ENCODE measurements at regions of chr5 and their contacts with region 1.

Region 1: DNA sequence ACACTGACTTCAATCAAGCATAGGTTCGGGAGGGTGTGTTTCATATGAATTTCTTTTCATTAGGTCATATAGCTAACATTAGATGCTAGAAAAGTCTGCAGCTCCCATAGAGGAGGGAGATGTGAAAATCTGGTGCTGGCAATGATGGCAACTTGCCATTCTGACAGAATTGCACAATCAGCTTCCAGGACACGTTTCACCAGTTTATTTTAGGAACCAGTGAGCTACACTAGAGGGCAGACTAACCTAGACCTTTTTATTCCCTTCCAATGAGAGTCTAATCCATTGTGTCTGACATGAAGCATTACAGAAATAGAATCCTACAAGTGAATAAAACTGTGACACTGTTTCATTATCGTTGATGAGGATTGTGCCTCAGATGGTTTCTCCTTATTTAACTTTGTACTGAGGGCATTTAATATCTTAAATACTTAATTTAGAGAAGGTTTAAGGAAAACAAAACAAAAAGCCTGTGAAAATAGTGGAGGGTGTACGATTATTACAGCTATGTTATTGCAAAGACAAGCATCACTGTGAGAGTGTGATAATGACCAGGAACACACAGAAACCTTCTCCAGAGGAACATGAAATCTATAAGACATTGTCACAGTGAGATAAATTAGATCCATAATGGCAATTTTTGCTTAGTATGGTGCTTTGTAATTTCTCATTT is 363.3 kb upstream of the RPS23 start:
- DNase-seq: peak in 1 of 2 donors; percentile 79
- ATAC-seq: peak; percentile 85 to 98 (median 94)
- H3K4me3 ChIP-seq: no peak overlapping the region
- H3K27ac ChIP-seq: peak overlapping the region in 4 of 10 donors; percentile 1 to 25 (median 20)
- H3K4me1 ChIP-seq: peaks cover 0 to 24% (median 9%) of the 10 kb centered on the region in 9 donors
- H3K27me3 ChIP-seq: no peaks in the 10 kb centered on the region
- CTCF ChIP-seq: peak; percentile 44 to 80 (median 71)

Region 2: GRCh38 chr5:82312373-82312856 is 329.1 kb before region 1 on chr5:
- intact Hi-C with region 1: loop called in 3 of 10 experiments (anchors 2 to 10 kb)
- DNase-seq: peak; percentile 54 to 64
- ATAC-seq: peak; percentile 68 to 90 (median 82)
- H3K4me3 ChIP-seq: peak overlapping the region in 2 of 10 donors; percentile 11 to 30
- H3K27ac ChIP-seq: peak overlapping the region in 7 of 10 donors; percentile 12 to 65 (median 37)
- H3K4me1 ChIP-seq: peaks cover 0 to 14% (median 10%) of the 10 kb centered on the region in 9 donors
- H3K27me3 ChIP-seq: no peaks in the 10 kb centered on the region
- CTCF ChIP-seq: peak; percentile 58 to 93 (median 80)

Region 3: GRCh38 chr5:82364497-82364896 is 277.0 kb before region 1 on chr5:
- intact Hi-C with region 1: loop called in 2 of 10 experiments (anchors 10 kb)
- DNase-seq: peak in 1 of 2 donors; percentile 35
- ATAC-seq: peak in 7 of 8 donors; percentile 67 to 90 (median 87)
- H3K4me3 ChIP-seq: no peak overlapping the region
- H3K27ac ChIP-seq: peak overlapping the region in 2 of 10 donors; percentile 29 to 51
- H3K4me1 ChIP-seq: peaks cover 0 to 26% (median 4%) of the 10 kb centered on the region in 9 donors
- H3K27me3 ChIP-seq: no peaks in the 10 kb centered on the region
- CTCF ChIP-seq: peak in 8 of 9 donors; percentile 28 to 64 (median 48)

Region 4: GRCh38 chr5:82793808-82794419 is 152.4 kb after region 1 on chr5:
- intact Hi-C with region 1: loop called in 7 of 10 experiments (anchors 5 to 10 kb)
- DNase-seq: peak in 1 of 2 donors; percentile 6
- ATAC-seq: no peak
- H3K4me3 ChIP-seq: no peak overlapping the region
- H3K27ac ChIP-seq: no peak overlapping the region
- H3K4me1 ChIP-seq: no peaks in the 10 kb centered on the region
- H3K27me3 ChIP-seq: no peaks in the 10 kb centered on the region
- CTCF ChIP-seq: peak; percentile 33 to 74 (median 66)

Region 5: DNA sequence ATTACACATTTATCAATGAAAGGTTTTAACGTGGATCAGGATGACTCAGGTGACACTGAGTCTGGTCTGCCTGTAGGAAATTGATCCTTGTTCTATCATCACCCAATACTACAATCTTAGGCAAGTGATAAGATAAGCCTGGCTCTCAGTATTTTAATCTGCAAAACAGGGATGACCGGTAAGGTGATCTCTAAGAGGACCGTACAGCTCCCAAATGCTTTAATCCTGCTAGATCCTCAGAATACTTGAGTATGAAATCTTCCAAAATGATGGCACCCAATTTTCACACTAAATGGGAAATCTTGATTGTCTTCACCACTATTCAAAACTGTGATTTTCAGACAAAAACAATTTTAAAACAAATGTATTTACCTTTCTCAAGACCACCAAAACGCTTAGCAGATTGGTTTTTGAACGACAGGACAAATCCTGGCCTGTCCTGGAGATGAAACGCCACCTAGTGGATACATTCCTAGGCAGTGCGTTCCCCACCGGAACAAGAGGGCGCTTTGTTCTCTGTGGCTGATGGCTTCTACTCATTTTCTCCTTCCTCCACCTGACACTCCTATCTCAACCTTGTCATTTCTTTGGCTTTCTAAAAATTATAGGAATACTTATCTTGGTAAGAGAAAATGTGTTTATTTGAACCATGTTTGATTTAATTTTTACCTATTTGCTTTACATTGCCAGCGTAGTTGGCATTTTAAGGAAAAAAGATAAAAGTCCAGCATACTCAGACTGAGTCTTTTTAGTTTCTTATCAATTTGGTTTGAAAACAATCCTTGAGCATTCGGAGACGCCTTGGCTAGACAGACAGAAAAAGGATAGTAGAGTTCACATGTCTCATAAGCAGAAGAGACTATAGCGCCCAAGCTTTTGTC is 788.9 kb after region 1 on chr5:
- intact Hi-C with region 1: loop called in 3 of 10 experiments (anchors 5 to 10 kb)
- DNase-seq: peak in 1 of 2 donors; percentile 60
- ATAC-seq: peak in 7 of 8 donors; percentile 52 to 88 (median 82)
- H3K4me3 ChIP-seq: no peak overlapping the region
- H3K27ac ChIP-seq: no peak overlapping the region
- H3K4me1 ChIP-seq: peaks cover 0 to 8% (median 0%) of the 10 kb centered on the region in 9 donors
- H3K27me3 ChIP-seq: no peaks in the 10 kb centered on the region
- CTCF ChIP-seq: peak; percentile 57 to 93 (median 86)

Region 6: GRCh38 chr5:83473346-83474163 is 832.1 kb after region 1 on chr5:
- intact Hi-C with region 1: loop called in 6 of 10 experiments (anchors 5 to 10 kb)
- DNase-seq: peak; percentile 84 to 90
- ATAC-seq: peak; percentile 81 to 92 (median 86)
- H3K4me3 ChIP-seq: peak overlapping the region; percentile 33 to 68 (median 58)
- H3K27ac ChIP-seq: peak overlapping the region; percentile 23 to 86 (median 77)
- H3K4me1 ChIP-seq: peaks cover 0 to 58% (median 36%) of the 10 kb centered on the region in 9 donors
- H3K27me3 ChIP-seq: peaks cover 0 to 84% (median 58%) of the 10 kb centered on the region in 7 donors
- CTCF ChIP-seq: peak; percentile 58 to 94 (median 84)

Region 7: DNA sequence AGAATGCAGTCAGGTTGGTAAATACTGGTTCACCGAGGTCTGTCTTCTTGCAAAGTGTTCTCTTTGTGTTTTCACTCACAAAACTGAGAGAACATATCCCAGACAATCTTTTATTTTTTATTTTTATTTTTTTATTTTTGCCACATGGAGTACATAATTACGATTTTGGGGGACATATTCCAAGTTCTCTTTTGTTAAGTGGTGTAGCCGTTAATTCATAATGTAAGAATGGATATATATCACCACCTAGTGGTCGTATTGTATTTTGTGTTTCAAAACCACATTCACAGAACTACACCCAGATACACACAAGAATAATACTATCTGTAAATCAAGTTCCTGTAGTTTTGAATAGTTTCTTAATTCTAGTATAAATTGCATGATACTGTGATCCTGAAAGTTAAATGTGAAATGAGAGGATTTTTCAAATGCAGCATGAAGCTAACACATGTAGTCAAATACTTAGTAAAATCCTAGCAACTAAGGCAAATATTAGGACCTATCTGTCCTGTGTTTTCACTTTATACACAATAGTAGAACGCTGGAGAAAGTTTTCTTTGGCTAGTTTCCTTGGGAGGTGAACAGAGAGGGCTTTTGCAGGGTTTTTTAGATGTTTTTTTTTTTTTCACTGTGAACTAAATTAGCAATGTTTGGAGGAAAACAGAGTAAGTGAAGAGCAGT is 922.7 kb after region 1 on chr5:
- intact Hi-C with region 1: loop called in 8 of 10 experiments (anchors 2 to 10 kb)
- DNase-seq: no peak
- ATAC-seq: peak; percentile 43 to 76 (median 62)
- H3K4me3 ChIP-seq: no peak overlapping the region
- H3K27ac ChIP-seq: peak overlapping the region in 1 of 10 donors; percentile 36
- H3K4me1 ChIP-seq: peaks cover 0 to 17% (median 5%) of the 10 kb centered on the region in 9 donors
- H3K27me3 ChIP-seq: no peaks in the 10 kb centered on the region
- CTCF ChIP-seq: peak; percentile 55 to 79 (median 65)